H1 (cell line): ENCODE measurements at regions of chr13 and their contacts with region 1.

Region 1: DNA sequence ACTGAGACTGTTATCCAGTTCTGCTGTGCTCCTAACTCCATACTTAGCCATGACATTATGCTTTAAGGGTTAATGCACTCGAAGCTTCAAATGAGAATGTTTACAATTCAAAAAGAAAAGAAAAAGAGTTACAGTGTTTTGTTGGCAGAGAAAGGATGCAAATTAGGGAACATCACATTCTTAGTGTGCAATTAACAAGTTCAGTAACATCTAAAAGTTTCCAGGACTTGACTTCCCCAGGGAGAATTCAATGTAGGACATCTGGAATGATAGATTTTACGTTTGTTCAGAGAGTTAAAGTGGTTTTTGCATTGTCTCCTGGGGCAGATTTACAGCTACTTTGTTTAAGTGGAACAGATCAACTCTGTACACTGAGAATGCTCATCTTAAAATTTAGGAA is 525.2 kb downstream of the LIG4 start:
- DNase-seq: no peak
- H3K4me3 ChIP-seq: no peak overlapping the region
- H3K27ac ChIP-seq: no peak overlapping the region
- H3K4me1 ChIP-seq: peaks cover 0 to 5% (median 0%) of the 10 kb centered on the region in 4 experiments; a peak in 1 of 7 replicates
- H3K27me3 ChIP-seq: no peaks in the 10 kb centered on the region
- CTCF ChIP-seq: no peak
- EP300 ChIP-seq: no peak
- POLR2A ChIP-seq: no peak
- RAD21 ChIP-seq: no peak

Region 2: GRCh38 chr13:107680115-107680514 is 10.1 kb before region 1 on chr13:
- CTCF ChIA-PET with region 1: interaction called, 11 read pairs
- POLR2A ChIA-PET with region 1: no interaction called
- DNase-seq: no peak
- H3K4me3 ChIP-seq: no peak overlapping the region
- H3K27ac ChIP-seq: no peak overlapping the region
- H3K4me1 ChIP-seq: no peaks in the 10 kb centered on the region; a peak in 1 of 7 replicates
- H3K27me3 ChIP-seq: no peaks in the 10 kb centered on the region
- CTCF ChIP-seq: peak; percentile 20 to 25 (median 23); a peak in 3 of 4 replicates
- EP300 ChIP-seq: no peak
- POLR2A ChIP-seq: no peak
- RAD21 ChIP-seq: peak; percentile 23 to 47; a peak in 3 of 4 replicates